ENCODE measurements at regions of chrX and their contacts with region 1.

Region 1: GRCh38 chrX:115642895-115643530 is 82.0 kb downstream of the PLS3 start:
- DNase-seq: peak; percentile 48
- H3K4me3 ChIP-seq: peak overlapping the region in 1 of 2 experiments; percentile 33; a peak in 1 of 4 replicates
- H3K27ac ChIP-seq: peak overlapping the region; percentile 34 to 51; a peak in 1 of 4 replicates
- H3K4me1 ChIP-seq: no peaks in the 10 kb centered on the region; a peak in 1 of 4 replicates
- H3K27me3 ChIP-seq: peaks cover 3% of the 10 kb centered on the region; the same call in 1 of the 2 replicates
- CTCF ChIP-seq: peak; percentile 98
- EP300 ChIP-seq: no peak
- RAD21 ChIP-seq: peak; percentile 90

Region 2: DNA sequence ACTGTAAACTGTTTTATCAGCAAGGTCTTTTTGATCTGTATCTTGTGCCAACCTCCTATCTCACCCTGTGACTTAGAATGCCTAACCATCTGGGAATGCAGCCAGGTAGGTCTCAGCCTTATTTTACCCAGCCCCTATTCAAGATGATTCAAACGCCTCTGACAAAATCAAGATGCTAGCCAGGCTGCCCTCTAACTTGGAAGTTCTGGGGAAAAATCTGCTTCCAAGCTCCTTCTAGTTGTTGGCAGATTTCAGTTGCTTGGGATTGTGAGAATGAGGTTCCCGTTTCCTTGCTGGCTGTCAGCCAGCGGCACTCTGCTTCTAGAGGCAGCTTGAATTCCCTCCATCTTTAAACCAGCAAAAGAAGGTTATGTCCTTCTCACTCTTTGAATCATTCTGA is 318.8 kb before region 1 on chrX:
- CTCF ChIA-PET with region 1: interaction called, 11 read pairs
- POLR2A ChIA-PET with region 1: no interaction called
- DNase-seq: no peak
- H3K4me3 ChIP-seq: no peak overlapping the region
- H3K27ac ChIP-seq: 0 out of 4 replicates have a peak overlapping the region, but pooled peaks of 1 of the 2 experiments have one; percentile 5
- H3K4me1 ChIP-seq: no peaks in the 10 kb centered on the region
- H3K27me3 ChIP-seq: no peaks in the 10 kb centered on the region; the same call in 1 of the 2 replicates
- CTCF ChIP-seq: no peak
- EP300 ChIP-seq: no peak
- RAD21 ChIP-seq: no peak

Region 3: DNA sequence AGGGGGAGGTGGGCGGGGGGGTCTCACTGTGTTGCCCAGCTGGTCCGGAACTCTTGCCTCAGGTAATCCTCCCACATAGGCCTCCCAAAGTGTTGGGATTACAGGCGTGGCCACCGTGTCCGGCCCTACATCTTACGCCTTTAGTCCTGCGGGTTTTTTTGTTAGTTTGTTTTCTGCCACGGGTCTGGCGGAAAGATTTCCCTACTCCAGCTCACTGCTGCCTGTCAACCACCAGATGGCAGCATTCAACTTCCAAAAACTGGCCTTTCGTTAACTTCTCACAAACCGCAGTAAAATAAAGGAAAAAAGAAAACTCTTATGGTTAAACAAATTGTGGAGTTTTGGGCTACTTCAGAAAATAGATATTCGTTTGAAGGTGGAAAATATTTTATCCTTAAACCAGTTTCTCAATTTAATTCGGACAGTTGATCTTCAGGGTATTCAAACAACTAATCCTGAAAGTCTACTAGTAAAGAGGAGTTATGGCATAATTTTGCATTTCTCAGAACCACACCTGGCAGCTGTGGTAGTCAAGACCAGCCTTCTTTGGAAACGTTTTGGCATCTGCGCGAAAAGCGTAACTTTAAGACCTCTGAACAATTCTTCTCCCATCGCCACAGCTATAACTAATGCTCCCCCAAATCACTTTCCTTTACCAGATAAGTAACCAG is 312.4 kb before region 1 on chrX:
- CTCF ChIA-PET with region 1: interaction called, 20 read pairs
- POLR2A ChIA-PET with region 1: no interaction called
- DNase-seq: peak; percentile 67
- H3K4me3 ChIP-seq: peak overlapping the region in 1 of 2 experiments; percentile 15; a peak in 1 of 4 replicates
- H3K27ac ChIP-seq: no peak overlapping the region
- H3K4me1 ChIP-seq: no peaks in the 10 kb centered on the region; a peak in 1 of 4 replicates
- H3K27me3 ChIP-seq: peaks cover 4% of the 10 kb centered on the region; the same call in 1 of the 2 replicates
- CTCF ChIP-seq: peak; percentile 91
- EP300 ChIP-seq: no peak
- RAD21 ChIP-seq: peak; percentile 92

Region 4: GRCh38 chrX:115625572-115626301 is 17.3 kb before region 1 on chrX:
- CTCF ChIA-PET with region 1: interaction called, 10 read pairs
- POLR2A ChIA-PET with region 1: no interaction called
- DNase-seq: no peak
- H3K4me3 ChIP-seq: no peak overlapping the region
- H3K27ac ChIP-seq: peak overlapping the region in 1 of 2 experiments; percentile 54; a peak in 2 of 4 replicates
- H3K4me1 ChIP-seq: no peaks in the 10 kb centered on the region
- H3K27me3 ChIP-seq: 0 out of 2 replicates have a peak, but pooled peaks cover 4% of the 10 kb centered on the region
- CTCF ChIP-seq: no peak
- EP300 ChIP-seq: no peak
- RAD21 ChIP-seq: no peak

Measured in SK-N-SH (cell line).